ENCODE measurements at regions of chr3 and their contacts with region 1.

Region 1: GRCh38 chr3:13648060-13649001 is 99.4 kb downstream of the FBLN2 start:
- DNase-seq: peak; percentile 85 to 95
- ATAC-seq: peak; percentile 74
- H3K4me3 ChIP-seq: no peak overlapping the region
- H3K27ac ChIP-seq: no peak overlapping the region
- H3K4me1 ChIP-seq: no peaks in the 10 kb centered on the region
- H3K27me3 ChIP-seq: no peaks in the 10 kb centered on the region

Region 2: GRCh38 chr3:13091898-13092611 is 556.3 kb before region 1 on chr3:
- intact Hi-C with region 1: loop called in 1 of 2 experiments (anchors 2 kb)
- DNase-seq: peak; percentile 86 to 93
- ATAC-seq: peak; percentile 84
- H3K4me3 ChIP-seq: no peak overlapping the region
- H3K27ac ChIP-seq: no peak overlapping the region
- H3K4me1 ChIP-seq: no peaks in the 10 kb centered on the region
- H3K27me3 ChIP-seq: no peaks in the 10 kb centered on the region

Region 3: GRCh38 chr3:13495921-13496723 is 152.2 kb before region 1 on chr3:
- intact Hi-C with region 1: loop called (anchors 1 kb)
- DNase-seq: peak; percentile 81 to 91
- ATAC-seq: peak; percentile 91
- H3K4me3 ChIP-seq: no peak overlapping the region
- H3K27ac ChIP-seq: no peak overlapping the region
- H3K4me1 ChIP-seq: no peaks in the 10 kb centered on the region
- H3K27me3 ChIP-seq: no peaks in the 10 kb centered on the region

Region 4: GRCh38 chr3:13884851-13885703 is 236.7 kb after region 1 on chr3:
- intact Hi-C with region 1: loop called (anchors 10 kb)
- DNase-seq: no peak
- ATAC-seq: no peak
- H3K4me3 ChIP-seq: no peak overlapping the region
- H3K27ac ChIP-seq: no peak overlapping the region
- H3K4me1 ChIP-seq: no peaks in the 10 kb centered on the region
- H3K27me3 ChIP-seq: no peaks in the 10 kb centered on the region

Measured in aorta (tissue), 5 donors.